Right ventricle myocardium superior (tissue), 1 donor: ENCODE measurements at regions of chr15 and their contacts with region 1.

Region 1: DNA sequence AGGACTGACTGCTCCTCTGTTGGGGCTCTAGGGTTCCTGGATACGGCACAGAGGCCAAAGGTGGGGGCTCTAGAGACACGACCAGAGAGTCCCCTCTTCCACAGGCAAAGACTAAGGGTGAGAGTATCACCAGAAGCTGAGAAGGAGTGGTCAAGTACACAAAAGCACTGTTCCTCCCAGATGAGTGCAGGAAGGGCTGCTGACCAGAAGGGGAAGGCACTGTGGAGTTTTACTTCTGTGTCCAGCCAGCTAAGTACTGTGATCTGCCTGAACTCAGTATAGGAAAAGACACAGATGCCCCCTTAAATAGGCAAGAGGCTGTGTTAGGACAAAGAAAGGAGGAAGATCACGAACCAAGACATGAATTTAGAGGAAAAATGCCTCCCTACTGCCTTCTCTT is 11.7 kb downstream of the MRPS11 start:
- DNase-seq: no peak
- ATAC-seq: peak; percentile 11

Region 2: DNA sequence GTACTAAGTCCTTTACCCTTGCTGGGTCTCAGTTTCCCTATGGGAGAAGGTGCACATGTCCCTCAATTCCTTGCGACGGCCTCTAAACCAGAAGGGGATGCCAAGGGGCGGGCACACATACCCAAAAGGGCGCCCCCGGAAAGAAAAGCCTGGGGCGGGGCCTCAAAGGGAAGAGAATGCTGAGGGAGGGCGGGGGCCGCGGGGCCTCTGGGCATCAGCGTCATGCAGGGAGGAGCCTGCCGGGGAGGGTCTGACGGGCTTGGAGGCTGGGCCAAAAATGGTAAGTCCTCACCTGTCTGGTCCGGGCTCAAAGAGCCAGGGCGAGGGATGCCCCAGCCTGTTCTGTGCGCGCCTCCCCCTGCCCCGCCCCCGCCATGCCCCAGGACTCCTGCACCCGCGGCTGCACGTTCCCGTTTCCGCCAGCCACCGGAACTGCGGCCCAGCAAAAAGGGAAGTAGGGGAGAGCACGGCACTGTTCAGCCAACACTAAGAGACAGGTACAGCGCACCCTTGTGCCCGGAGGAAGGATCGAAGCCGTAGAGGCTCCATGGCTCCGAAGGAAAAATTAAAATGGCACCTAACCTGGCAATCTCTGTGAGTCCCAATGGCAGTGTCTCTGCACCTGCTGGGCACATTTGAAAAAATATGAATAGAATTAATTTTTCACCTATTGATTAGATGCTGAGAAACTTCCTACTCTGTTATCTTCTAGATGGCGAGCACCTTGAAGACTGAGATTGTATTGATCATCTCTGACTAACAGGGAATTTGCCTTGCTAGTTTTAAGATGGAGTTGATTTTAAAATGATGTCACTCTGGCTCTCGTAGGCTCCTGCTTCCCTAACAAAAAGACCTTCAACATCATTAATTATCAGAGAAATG is 67.3 kb after region 1 on chr15 and contains the start of gene DET1:
- intact Hi-C with region 1: no loop called
- DNase-seq: peak; percentile 97
- ATAC-seq: peak; percentile 99
- total RNA-seq, gene DET1: 6.8 TPM

Region 3: DNA sequence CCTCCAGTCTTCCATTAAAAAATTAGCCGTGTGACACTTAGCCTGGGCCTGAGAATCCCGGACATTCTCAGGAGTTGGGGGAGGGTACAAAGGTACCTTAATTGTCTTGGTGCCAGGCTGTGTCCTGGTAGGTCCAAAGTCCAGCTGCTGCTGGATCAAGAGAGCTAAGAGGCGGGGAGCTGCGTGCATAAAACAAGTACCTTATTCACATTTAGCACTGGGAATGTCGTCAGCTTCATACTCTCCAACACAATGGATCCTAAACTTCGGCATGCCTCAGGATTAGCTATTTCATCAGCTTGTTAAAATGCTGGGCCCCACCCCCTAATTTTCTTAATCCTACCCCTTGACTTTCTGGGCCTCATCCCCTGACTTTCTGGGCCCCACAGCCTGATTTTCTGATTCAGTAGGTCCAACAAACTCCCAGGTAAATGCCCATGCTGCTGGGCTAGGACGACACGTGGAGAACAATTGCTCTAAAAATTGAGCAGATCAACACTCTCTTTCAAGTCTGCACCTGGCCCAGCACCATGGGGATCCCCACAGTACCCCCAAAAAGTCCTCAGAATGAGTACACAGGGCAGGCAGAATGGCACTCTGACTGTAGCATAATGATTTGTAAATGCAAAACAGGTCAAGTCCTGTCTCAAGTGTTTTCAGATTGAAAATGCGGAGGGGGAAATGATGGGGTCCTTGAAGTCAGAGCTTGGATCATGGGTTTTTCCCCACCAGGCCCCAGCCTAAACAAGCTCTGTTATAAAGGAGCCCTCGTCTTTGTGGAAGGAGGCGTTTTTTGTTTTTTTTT is 136.3 kb after region 1 on chr15:
- intact Hi-C with region 1: loop called (anchors 2 kb)
- DNase-seq: no peak
- ATAC-seq: no peak